Heart right ventricle (tissue), 16 donors: ENCODE measurements at regions of chr4 and their contacts with region 1.

Region 1: GRCh38 chr4:5568931-5569330 is 139.4 kb downstream of the EVC2 start:
- DNase-seq: no peak
- ATAC-seq: no peak
- H3K4me3 ChIP-seq: no peak overlapping the region
- H3K27ac ChIP-seq: no peak overlapping the region
- H3K4me1 ChIP-seq: no peaks in the 10 kb centered on the region
- H3K27me3 ChIP-seq: no peaks in the 10 kb centered on the region
- CTCF ChIP-seq: no peak

Region 2: DNA sequence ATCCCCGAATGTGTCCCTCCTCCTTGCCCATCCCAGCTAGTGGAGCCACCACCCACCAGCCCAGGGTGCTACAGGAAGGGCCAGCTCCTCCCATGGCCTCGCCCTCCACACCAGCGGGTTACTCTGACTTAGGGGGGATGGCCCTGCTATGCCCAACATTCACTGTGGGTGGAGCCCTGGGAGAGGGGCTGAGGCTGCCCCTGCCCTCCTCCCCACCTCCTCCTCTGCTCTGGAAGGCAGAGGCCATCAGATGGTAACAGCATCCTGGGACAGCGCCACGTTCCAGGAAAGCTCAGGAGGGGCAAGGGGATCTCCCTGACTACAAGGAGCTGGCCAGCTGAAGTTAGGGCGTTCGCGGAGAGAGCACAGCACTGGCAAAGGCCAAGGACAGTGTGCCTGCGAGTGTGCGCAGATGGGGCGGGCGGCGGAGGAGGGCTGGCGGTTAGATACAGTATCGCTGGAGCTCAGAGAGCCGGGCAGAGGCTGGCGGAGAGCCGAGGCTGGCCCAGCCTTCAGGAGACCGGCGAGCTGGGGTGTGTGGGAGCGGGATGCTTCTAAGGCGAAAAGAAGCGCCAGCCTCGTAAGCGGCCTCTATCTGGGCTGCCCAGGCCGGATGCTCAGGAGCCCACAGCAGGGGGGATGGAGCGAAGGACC is 630.0 kb after region 1 on chr4:
- intact Hi-C with region 1: loop called in 1 of 10 experiments (anchors 10 kb)
- DNase-seq: no peak
- ATAC-seq: peak in 1 of 8 donors; percentile 12
- H3K4me3 ChIP-seq: peak overlapping the region in 7 of 10 donors; percentile 8 to 60 (median 48)
- H3K27ac ChIP-seq: peak overlapping the region in 1 of 10 donors; percentile 66
- H3K4me1 ChIP-seq: peaks cover 0 to 18% (median 10%) of the 10 kb centered on the region in 9 donors
- H3K27me3 ChIP-seq: peaks cover 28 to 78% (median 67%) of the 10 kb centered on the region in 7 donors
- CTCF ChIP-seq: no peak